AG04450 (cell line): ENCODE measurements at regions of chr7 and their contacts with region 1.

Region 1: DNA sequence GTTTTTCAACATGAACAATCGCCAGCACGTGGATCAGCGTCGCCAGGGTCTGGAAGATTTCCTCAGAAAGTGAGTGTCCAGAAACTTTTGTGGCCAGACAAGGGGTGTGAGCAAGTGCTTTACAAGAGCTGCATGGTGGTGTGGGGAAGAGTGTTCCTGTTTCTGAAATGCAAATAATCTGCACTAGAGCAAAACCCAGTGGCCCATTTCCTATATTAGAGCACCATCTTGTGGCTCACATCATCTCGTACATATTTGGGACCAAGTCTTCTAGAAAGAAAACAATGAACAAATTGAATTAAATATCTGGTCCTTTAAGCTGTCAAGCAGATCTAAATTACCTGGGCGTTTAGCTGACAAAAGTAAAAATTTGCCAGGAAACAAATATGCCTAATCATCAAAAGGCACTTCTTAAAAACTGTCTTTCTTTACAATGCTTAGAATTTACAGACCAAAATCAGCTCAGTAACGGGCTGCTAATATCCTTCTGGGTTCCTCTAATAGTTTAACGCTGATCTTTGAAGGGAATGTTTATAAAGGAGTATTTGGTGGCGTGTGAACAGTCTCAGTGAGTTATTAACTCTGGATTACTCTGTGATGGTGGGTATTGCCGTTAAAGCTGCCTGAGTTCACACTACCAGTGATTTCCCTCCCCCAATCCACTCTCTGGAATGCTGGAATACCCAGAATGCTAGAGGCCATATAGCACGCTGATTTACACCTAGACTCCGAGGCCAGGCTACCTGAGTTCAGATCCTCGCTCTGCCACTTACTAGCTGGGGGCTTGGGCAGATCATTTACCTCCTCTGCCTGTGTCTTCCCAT is 73.6 kb downstream of the SNX10 start:
- DNase-seq: peak; percentile 57
- H3K4me3 ChIP-seq: no peak overlapping the region
- H3K27ac ChIP-seq: no peak overlapping the region
- H3K27me3 ChIP-seq: peaks cover 24% of the 10 kb centered on the region
- CTCF ChIP-seq: peak; percentile 74

Region 2: GRCh38 chr7:25894902-25895791 is 470.1 kb before region 1 on chr7:
- CTCF ChIA-PET with region 1: interaction called, 365 read pairs
- POLR2A ChIA-PET with region 1: no interaction called
- DNase-seq: no peak
- H3K4me3 ChIP-seq: no peak overlapping the region
- H3K27ac ChIP-seq: no peak overlapping the region
- H3K27me3 ChIP-seq: peaks cover 17% of the 10 kb centered on the region
- CTCF ChIP-seq: peak; percentile 70

Region 3: DNA sequence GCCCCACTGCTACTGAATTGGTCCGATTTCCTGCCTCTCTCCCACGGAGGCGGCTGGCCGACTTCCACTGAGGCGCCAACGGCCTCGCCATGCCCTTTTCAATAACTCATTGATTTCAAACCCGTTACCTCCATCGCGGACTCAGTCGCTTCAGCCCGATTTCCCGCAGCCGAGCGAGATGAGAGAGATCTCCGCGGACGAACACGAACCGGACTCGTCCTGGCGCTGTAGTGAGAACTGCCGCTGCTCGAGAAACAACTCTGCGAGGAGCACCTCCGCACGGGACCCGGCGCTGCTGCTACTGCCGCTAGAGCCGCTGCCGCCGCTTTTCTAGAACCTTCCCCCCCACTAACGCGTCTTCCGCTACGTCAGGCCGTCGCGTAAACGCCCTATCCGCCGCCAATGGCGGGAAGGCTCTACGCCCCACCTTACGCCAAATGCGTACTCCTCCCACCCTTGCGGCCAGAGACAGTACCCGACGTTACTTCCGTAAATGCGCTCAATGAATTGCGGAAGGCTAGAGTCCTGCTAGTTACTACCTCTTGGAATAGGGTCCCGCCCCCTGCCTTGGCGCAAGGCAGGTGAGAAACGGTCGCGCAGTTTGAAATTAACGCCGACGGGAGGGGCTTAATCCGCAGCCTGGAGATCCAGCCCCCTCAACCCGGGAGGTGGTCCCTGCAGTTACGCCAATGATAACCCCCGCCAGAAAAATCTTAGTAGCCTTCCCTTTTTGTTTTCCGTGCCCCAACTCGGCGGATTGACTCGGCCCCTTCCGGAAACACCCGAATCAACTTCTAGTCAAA is 164.6 kb before region 1 on chr7 and contains the start of gene HNRNPA2B1:
- CTCF ChIA-PET with region 1: interaction called, 16 read pairs
- POLR2A ChIA-PET with region 1: interaction called, 4 read pairs
- DNase-seq: peak; percentile 93
- H3K4me3 ChIP-seq: peak within 1 kb of the TSS; percentile 97
- H3K27ac ChIP-seq: peak within 1 kb of the TSS; percentile 96
- H3K27me3 ChIP-seq: no peaks in the 10 kb centered on the region
- CTCF ChIP-seq: no peak
- polyA plus RNA-seq, gene HNRNPA2B1: 354 and 493 TPM in 2 replicates

Region 4: GRCh38 chr7:26398756-26399501 is 33.6 kb after region 1 on chr7:
- CTCF ChIA-PET with region 1: interaction called, 24 read pairs
- POLR2A ChIA-PET with region 1: no interaction called
- DNase-seq: no peak
- H3K4me3 ChIP-seq: peak overlapping the region; percentile 58
- H3K27ac ChIP-seq: no peak overlapping the region
- H3K27me3 ChIP-seq: peaks cover 11% of the 10 kb centered on the region
- CTCF ChIP-seq: no peak

Region 5: GRCh38 chr7:26429168-26429567 is 63.9 kb after region 1 on chr7:
- CTCF ChIA-PET with region 1: no interaction called
- POLR2A ChIA-PET with region 1: no interaction called
- DNase-seq: no peak
- H3K4me3 ChIP-seq: no peak overlapping the region
- H3K27ac ChIP-seq: no peak overlapping the region
- H3K27me3 ChIP-seq: no peaks in the 10 kb centered on the region
- CTCF ChIP-seq: no peak

Region 6: GRCh38 chr7:26686448-26686981 is 321.2 kb after region 1 on chr7:
- CTCF ChIA-PET with region 1: interaction called, 27 read pairs
- POLR2A ChIA-PET with region 1: no interaction called
- DNase-seq: peak; percentile 78
- H3K4me3 ChIP-seq: no peak overlapping the region
- H3K27ac ChIP-seq: peak overlapping the region; percentile 41
- H3K27me3 ChIP-seq: no peaks in the 10 kb centered on the region
- CTCF ChIP-seq: peak; percentile 63

Region 7: GRCh38 chr7:27160546-27161213 is 795.4 kb after region 1 on chr7:
- CTCF ChIA-PET with region 1: interaction called, 171 read pairs
- POLR2A ChIA-PET with region 1: interaction called, 3 read pairs
- DNase-seq: peak; percentile 64
- H3K4me3 ChIP-seq: peak overlapping the region; percentile 62
- H3K27ac ChIP-seq: no peak overlapping the region
- H3K27me3 ChIP-seq: peaks cover 26% of the 10 kb centered on the region
- CTCF ChIP-seq: peak; percentile 96